ENCODE measurements at regions of chr1 and their contacts with region 1.

Region 1: DNA sequence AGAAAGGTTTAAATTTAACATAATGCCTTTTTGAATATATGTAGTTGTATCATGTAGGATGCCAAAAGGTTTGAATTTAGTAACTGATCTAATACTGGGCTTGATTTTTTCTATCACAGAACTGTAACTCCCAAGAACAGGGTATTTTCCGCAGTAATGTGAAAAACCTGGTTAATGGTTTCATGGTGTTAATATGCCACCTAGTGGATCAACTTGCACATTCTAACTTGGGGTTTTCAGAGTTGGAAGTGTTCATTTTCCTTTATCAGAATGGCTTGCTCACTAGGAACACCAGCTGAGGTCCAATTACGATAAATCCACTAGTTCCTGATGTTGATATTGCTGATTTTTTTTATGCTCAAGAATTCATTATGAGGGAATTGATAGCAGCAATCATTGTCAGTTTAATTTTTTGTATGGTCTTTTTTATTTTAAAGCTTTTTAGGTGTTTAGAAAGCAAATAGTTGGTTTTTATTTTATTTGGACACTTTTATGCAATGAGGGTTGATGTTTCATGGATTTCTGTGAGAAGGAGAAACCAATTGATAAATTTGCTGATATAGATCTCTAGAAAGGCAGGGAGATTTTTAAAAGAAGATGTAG is 157.2 kb downstream of the PLA2G4A start:
- H3K4me3 Mint-ChIP-seq: no peak overlapping the region
- H3K27ac Mint-ChIP-seq: no peak overlapping the region
- H3K4me1 Mint-ChIP-seq: no peaks in the 10 kb centered on the region
- H3K27me3 Mint-ChIP-seq: no peaks in the 10 kb centered on the region

Region 2: GRCh38 chr1:186404454-186405051 is 581.4 kb before region 1 on chr1:
- intact Hi-C with region 1: loop called (anchors 5 kb)
- H3K4me3 Mint-ChIP-seq: no peak overlapping the region
- H3K27ac Mint-ChIP-seq: no peak overlapping the region
- H3K4me1 Mint-ChIP-seq: no peaks in the 10 kb centered on the region
- H3K27me3 Mint-ChIP-seq: no peaks in the 10 kb centered on the region

Region 3: DNA sequence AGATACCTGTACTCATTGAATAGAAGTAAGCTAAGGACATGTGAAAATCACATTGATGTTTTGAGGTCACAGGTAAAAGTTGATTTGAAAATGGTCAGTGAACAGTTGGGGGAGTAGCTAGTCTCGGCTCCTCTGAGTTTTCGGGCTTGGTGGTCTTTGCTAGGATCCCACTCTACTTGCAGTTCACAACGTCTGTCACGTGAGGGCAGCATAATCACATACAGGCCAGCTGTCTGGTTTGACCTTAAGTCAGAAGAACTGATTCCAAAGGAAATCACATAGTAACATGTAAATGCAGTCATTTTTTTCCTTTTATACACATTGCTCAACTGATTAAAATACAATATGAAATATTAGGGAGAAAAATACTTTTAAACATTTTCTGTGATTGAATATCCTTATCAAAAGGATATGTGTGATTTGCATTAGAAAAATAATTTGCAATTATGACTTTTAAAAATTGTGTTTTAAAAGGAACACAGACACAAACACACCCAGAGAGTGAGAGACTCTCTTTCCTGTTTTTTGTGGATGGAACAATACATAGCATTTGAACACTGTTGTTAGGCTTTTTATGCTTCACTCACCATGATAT is 503.2 kb before region 1 on chr1:
- intact Hi-C with region 1: loop called (anchors 2 kb)
- H3K4me3 Mint-ChIP-seq: no peak overlapping the region
- H3K27ac Mint-ChIP-seq: no peak overlapping the region
- H3K4me1 Mint-ChIP-seq: no peaks in the 10 kb centered on the region
- H3K27me3 Mint-ChIP-seq: no peaks in the 10 kb centered on the region

Region 4: DNA sequence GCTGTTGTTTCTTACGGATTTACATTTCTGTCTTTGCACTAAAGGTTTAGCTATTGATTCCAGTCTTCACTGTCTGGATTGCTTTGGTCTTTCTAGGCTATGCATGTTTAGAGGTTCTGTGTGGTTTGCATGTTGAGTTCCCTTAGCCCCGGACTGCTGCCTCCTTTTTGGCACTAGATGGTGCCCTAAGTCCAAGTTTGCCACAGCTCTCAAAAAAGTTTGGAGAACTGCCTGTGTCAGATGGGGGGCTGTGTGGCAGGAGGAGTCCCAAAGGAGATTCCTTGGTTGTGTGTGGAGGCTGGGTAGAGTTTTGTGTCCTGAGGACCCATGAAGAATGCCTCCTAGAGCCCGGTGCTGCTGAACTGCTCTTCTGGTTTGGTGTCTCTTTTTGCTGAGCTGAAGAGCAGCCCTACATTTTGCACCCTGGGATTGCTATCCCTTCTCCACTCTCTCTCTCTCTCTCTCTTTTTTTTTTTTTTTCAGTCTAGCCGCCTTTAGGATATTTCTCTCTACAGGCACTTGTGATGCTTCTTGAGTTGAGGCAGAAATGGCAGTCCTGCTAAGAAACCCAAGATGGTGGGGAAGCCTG is 380.1 kb before region 1 on chr1:
- intact Hi-C with region 1: loop called (anchors 1 kb)
- H3K4me3 Mint-ChIP-seq: no peak overlapping the region
- H3K27ac Mint-ChIP-seq: no peak overlapping the region
- H3K4me1 Mint-ChIP-seq: peaks cover 9% of the 10 kb centered on the region
- H3K27me3 Mint-ChIP-seq: no peaks in the 10 kb centered on the region

Region 5: GRCh38 chr1:186722711-186723309 is 263.2 kb before region 1 on chr1:
- intact Hi-C with region 1: loop called (anchors 5 kb)
- H3K4me3 Mint-ChIP-seq: no peak overlapping the region
- H3K27ac Mint-ChIP-seq: no peak overlapping the region
- H3K4me1 Mint-ChIP-seq: no peaks in the 10 kb centered on the region
- H3K27me3 Mint-ChIP-seq: no peaks in the 10 kb centered on the region